CD8-positive, alpha-beta T cell (primary cell): ENCODE measurements at regions of chr10 and their contacts with region 1.

Region 1: DNA sequence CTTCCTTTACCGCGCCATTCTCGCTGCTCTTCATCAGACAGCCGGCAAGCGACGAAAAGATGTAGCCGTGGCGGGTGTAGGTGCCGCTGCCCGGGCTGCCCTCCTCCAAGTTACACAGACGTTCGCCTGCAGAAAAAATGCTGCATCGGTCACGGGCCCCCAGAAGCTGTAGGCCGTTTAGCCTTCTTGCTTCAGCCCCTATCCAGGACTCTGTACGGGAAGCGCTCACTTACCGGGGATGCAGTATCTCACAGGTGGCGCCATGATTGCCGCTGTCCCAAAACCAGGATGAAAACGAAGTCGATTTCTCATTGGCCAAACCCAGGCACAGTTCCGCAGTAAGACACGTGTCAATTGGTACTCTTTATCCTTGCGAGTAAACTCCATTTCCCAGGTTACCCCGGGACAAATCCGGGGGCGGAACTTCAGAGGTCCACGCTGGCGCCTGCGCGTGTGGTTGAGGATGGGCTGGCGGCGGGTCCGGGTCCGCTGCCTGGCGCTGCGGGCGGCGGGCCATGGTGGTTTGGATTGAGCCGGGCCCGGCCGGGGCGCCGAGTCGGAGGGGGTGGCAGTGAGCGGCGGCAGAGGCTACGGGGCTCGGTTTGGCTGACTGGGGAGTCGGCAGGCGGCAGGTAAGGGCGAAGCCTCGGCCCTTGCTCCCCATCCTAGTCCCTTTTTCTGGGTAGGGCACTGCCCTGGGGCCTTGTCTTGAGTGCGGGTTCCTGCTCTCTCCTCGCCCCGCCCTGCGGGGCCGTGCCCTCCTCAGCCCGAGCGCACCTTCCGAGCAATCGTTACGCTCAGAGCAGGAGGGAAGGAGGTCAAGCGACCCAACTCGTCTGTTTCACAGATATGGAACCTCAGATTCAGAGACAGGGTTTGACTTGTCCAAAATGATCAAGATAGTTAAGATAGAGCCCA is at the starts of genes EXOSC1 and ZDHHC16:
- DNase-seq: peak; percentile 73 to 95 (median 89)
- ATAC-seq: peak; percentile 97
- H3K4me3 ChIP-seq: peak within 1 kb of the TSS; percentile 89 to 95
- H3K4me3 Mint-ChIP-seq: peak within 1 kb of the TSS; percentile 99
- H3K27ac ChIP-seq: peak within 1 kb of the TSS; percentile 69 to 75
- H3K27ac Mint-ChIP-seq: peak within 1 kb of the TSS; percentile 94
- H3K4me1 ChIP-seq: peaks cover 24% of the 10 kb centered on the region
- H3K4me1 Mint-ChIP-seq: peaks cover 47% of the 10 kb centered on the region
- H3K27me3 ChIP-seq: no peaks in the 10 kb centered on the region
- H3K27me3 Mint-ChIP-seq: no peaks in the 10 kb centered on the region
- CTCF ChIP-seq: no peak
- total RNA-seq, gene EXOSC1: 30.2 to 30.4 TPM
- total RNA-seq, gene ZDHHC16: 4.7 to 6.2 TPM

Region 2: GRCh38 chr10:97170326-97170725 is 275.7 kb before region 1 on chr10:
- CTCF ChIA-PET with region 1: no interaction called
- POLR2A ChIA-PET with region 1: no interaction called
- intact Hi-C with region 1: no loop called
- DNase-seq: no peak
- ATAC-seq: no peak
- H3K4me3 ChIP-seq: no peak overlapping the region
- H3K4me3 Mint-ChIP-seq: no peak overlapping the region
- H3K27ac ChIP-seq: no peak overlapping the region
- H3K27ac Mint-ChIP-seq: no peak overlapping the region
- H3K4me1 ChIP-seq: no peaks in the 10 kb centered on the region
- H3K4me1 Mint-ChIP-seq: no peaks in the 10 kb centered on the region
- H3K27me3 ChIP-seq: no peaks in the 10 kb centered on the region
- H3K27me3 Mint-ChIP-seq: peaks cover 11% of the 10 kb centered on the region
- CTCF ChIP-seq: no peak

Region 3: GRCh38 chr10:97292097-97292862 is 153.7 kb before region 1 on chr10 and contains the start of gene ARHGAP19:
- CTCF ChIA-PET with region 1: no interaction called
- POLR2A ChIA-PET with region 1: no interaction called
- intact Hi-C with region 1: loop called (anchors 1 to 5 kb)
- DNase-seq: peak; percentile 86 to 98 (median 91)
- ATAC-seq: peak; percentile 99
- H3K4me3 ChIP-seq: peak within 1 kb of the TSS; percentile 82 to 93
- H3K4me3 Mint-ChIP-seq: peak within 1 kb of the TSS; percentile 94
- H3K27ac ChIP-seq: peak within 1 kb of the TSS; percentile 73 to 75
- H3K27ac Mint-ChIP-seq: peak within 1 kb of the TSS; percentile 86
- H3K4me1 ChIP-seq: peaks cover 6% of the 10 kb centered on the region
- H3K4me1 Mint-ChIP-seq: peaks cover 20% of the 10 kb centered on the region
- H3K27me3 ChIP-seq: no peaks in the 10 kb centered on the region
- H3K27me3 Mint-ChIP-seq: no peaks in the 10 kb centered on the region
- CTCF ChIP-seq: no peak
- total RNA-seq, gene ARHGAP19: 5.7 to 6.4 TPM

Region 4: GRCh38 chr10:97407211-97407951 is 38.6 kb before region 1 on chr10:
- CTCF ChIA-PET with region 1: interaction called, 3 read pairs
- POLR2A ChIA-PET with region 1: no interaction called
- intact Hi-C with region 1: loop called (anchors 1 to 2 kb)
- DNase-seq: peak in 8 of 9 experiments; percentile 41 to 87 (median 66)
- ATAC-seq: peak; percentile 99
- H3K4me3 ChIP-seq: peak overlapping the region in 1 of 2 experiments; percentile 27
- H3K4me3 Mint-ChIP-seq: peak overlapping the region; percentile 45
- H3K27ac ChIP-seq: peak overlapping the region in 1 of 2 experiments; percentile 51
- H3K27ac Mint-ChIP-seq: peak overlapping the region; percentile 37
- H3K4me1 ChIP-seq: peaks cover 5% of the 10 kb centered on the region
- H3K4me1 Mint-ChIP-seq: peaks cover 11% of the 10 kb centered on the region
- H3K27me3 ChIP-seq: no peaks in the 10 kb centered on the region
- H3K27me3 Mint-ChIP-seq: no peaks in the 10 kb centered on the region
- CTCF ChIP-seq: peak; percentile 86

Region 5: DNA sequence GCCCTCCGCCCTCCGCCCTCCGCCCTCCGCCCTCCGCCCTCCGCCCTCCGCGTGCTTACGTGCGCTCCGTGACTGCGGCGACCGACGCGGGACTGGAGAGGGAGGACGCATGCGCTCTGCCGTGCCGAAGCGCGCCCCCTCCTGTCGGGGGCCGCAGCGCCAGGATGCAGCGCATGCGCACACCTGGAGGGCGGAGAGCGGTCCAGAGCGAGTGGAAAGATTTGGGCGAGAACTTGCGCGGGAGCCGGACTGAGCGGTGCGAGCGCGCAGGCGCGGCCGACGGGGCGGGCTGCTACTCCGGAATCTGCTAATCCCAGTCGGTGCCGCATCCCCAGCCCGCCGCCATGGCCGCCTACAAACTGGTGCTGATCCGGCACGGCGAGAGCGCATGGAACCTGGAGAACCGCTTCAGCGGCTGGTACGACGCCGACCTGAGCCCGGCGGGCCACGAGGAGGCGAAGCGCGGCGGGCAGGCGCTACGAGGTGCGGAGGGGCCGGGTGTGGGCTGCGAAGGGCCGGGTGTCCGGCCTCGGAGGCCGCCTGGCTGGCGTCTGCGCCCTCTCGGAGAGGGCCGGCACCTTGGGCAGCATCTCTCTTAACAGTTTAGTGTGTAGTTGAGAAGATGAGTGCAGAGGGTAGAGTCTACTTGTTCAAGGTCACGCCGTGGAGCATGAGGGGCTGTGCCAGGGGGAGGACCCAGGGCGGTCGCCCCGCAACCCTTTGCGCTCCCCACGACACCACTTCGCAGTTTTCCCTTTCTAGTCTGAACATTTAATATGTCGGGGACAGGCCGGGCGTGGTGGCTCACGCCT is 19.8 kb before region 1 on chr10 and contains the start of gene PGAM1:
- CTCF ChIA-PET with region 1: no interaction called
- POLR2A ChIA-PET with region 1: interaction called, 3 read pairs
- intact Hi-C with region 1: loop called (anchors 1 kb)
- DNase-seq: peak; percentile 91 to 99 (median 93)
- ATAC-seq: peak; percentile 81
- H3K4me3 ChIP-seq: peak within 1 kb of the TSS; percentile 84
- H3K4me3 Mint-ChIP-seq: peak within 1 kb of the TSS; percentile 90
- H3K27ac ChIP-seq: peak within 1 kb of the TSS; percentile 85 to 86
- H3K27ac Mint-ChIP-seq: peak within 1 kb of the TSS; percentile 92
- H3K4me1 ChIP-seq: peaks cover 24% of the 10 kb centered on the region
- H3K4me1 Mint-ChIP-seq: peaks cover 44% of the 10 kb centered on the region
- H3K27me3 ChIP-seq: no peaks in the 10 kb centered on the region
- H3K27me3 Mint-ChIP-seq: no peaks in the 10 kb centered on the region
- CTCF ChIP-seq: peak; percentile 47
- total RNA-seq, gene PGAM1: 56.7 to 56.8 TPM

Region 6: DNA sequence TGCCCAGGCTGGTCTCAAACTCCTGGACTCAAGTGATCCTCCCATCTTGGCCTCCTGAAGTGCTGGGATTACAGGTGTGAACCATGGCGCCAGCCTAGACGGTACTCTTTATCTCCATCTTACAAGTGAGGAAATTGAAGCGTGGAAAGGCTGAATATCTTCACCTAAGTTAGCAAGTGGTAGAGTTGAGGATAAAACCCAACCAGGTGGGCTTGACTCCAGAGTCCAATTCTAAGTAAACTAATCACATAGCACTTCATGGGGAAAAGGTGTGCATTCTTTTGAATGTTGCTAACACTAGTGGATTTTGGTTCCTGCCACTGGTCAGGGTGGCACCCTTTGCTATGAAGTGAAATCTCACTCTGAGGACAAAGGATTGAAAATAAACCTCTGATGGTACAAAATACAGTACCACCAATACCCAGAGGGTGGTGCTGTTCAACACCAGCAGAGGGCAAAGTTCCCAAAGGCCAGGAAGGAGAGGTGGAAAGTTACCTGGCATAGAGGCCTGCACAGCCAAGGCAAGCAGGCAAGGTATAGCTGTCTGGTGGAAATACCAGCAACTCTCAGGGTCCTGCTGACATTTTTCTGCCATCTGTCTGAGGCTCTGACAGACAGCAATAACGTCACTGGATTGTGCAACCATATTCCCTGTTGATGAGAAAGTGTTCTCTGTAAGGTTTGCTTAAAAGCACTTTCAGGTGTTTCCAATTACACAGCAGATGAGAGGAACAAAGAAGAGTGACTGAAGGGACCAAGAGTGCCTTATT is 17.6 kb after region 1 on chr10:
- CTCF ChIA-PET with region 1: interaction called, 5 read pairs
- POLR2A ChIA-PET with region 1: no interaction called
- intact Hi-C with region 1: loop called in 1 of 2 experiments (anchors 2 kb)
- DNase-seq: peak in 6 of 9 experiments; percentile 7 to 66 (median 36)
- ATAC-seq: peak; percentile 91
- H3K4me3 ChIP-seq: no peak overlapping the region
- H3K4me3 Mint-ChIP-seq: no peak overlapping the region
- H3K27ac ChIP-seq: no peak overlapping the region
- H3K27ac Mint-ChIP-seq: peak overlapping the region; percentile 45
- H3K4me1 ChIP-seq: no peaks in the 10 kb centered on the region
- H3K4me1 Mint-ChIP-seq: no peaks in the 10 kb centered on the region
- H3K27me3 ChIP-seq: no peaks in the 10 kb centered on the region
- H3K27me3 Mint-ChIP-seq: no peaks in the 10 kb centered on the region
- CTCF ChIP-seq: peak; percentile 83

Region 7: DNA sequence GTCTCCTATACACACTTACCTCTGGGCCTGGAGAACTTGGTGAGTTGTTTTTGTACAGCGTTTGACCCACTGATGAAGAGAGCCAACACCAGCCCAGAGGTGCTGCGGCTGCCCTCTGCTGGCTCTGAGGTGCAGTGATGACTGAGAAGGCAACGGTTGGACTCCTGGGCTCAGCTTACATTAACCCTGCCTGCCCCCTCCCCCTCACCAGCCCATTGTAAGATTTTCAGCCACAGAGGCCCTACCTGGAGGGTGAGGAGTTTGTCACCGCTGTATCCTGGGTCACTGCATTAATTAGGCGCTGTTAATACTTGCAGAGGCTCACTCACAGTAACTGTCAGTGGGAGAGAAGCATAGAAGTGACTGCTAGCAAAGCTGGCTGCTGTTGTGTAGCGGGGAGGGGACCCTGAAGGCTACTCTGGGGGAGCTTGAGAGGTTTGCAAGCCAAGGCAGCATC is 107.6 kb after region 1 on chr10:
- CTCF ChIA-PET with region 1: no interaction called
- POLR2A ChIA-PET with region 1: no interaction called
- intact Hi-C with region 1: loop called in 1 of 2 experiments (anchors 5 kb)
- DNase-seq: peak; percentile 30 to 72 (median 56)
- ATAC-seq: peak; percentile 79
- H3K4me3 ChIP-seq: no peak overlapping the region
- H3K4me3 Mint-ChIP-seq: no peak overlapping the region
- H3K27ac ChIP-seq: no peak overlapping the region
- H3K27ac Mint-ChIP-seq: no peak overlapping the region
- H3K4me1 ChIP-seq: no peaks in the 10 kb centered on the region
- H3K4me1 Mint-ChIP-seq: peaks cover 2% of the 10 kb centered on the region
- H3K27me3 ChIP-seq: no peaks in the 10 kb centered on the region
- H3K27me3 Mint-ChIP-seq: no peaks in the 10 kb centered on the region
- CTCF ChIP-seq: peak; percentile 52

Region 8: GRCh38 chr10:97632949-97633884 is 187.2 kb after region 1 on chr10 and contains the start of gene MORN4:
- CTCF ChIA-PET with region 1: no interaction called
- POLR2A ChIA-PET with region 1: no interaction called
- intact Hi-C with region 1: loop called (anchors 1 to 5 kb)
- DNase-seq: peak; percentile 82 to 96 (median 91)
- ATAC-seq: peak; percentile 99
- H3K4me3 ChIP-seq: peak within 1 kb of the TSS; percentile 77 to 89
- H3K4me3 Mint-ChIP-seq: peak within 1 kb of the TSS; percentile 99
- H3K27ac ChIP-seq: peak within 1 kb of the TSS; percentile 18 to 39
- H3K27ac Mint-ChIP-seq: peak within 1 kb of the TSS; percentile 83
- H3K4me1 ChIP-seq: peaks cover 3% of the 10 kb centered on the region
- H3K4me1 Mint-ChIP-seq: peaks cover 13% of the 10 kb centered on the region
- H3K27me3 ChIP-seq: peaks cover 0 to 3% of the 10 kb centered on the region in 2 experiments
- H3K27me3 Mint-ChIP-seq: no peaks in the 10 kb centered on the region
- CTCF ChIP-seq: no peak
- total RNA-seq, gene MORN4: not detected